OCI-LY7 (cell line): ENCODE measurements at regions of chr21 and their contacts with region 1.

Region 1: GRCh38 chr21:18468790-18469189 is 65.2 kb upstream of the TMPRSS15 start:
- DNase-seq: no peak
- H3K4me3 ChIP-seq: no peak overlapping the region
- H3K27ac ChIP-seq: no peak overlapping the region
- H3K4me1 ChIP-seq: peaks cover 20% of the 10 kb centered on the region
- CTCF ChIP-seq: no peak

Region 2: GRCh38 chr21:18382141-18382540 is 86.6 kb before region 1 on chr21:
- CTCF ChIA-PET with region 1: no interaction called
- POLR2A ChIA-PET with region 1: no interaction called
- intact Hi-C with region 1: loop called (anchors 1 kb)
- DNase-seq: peak; percentile 78
- H3K4me3 ChIP-seq: peak overlapping the region; percentile 24
- H3K27ac ChIP-seq: peak overlapping the region; percentile 86
- H3K4me1 ChIP-seq: peaks cover 30% of the 10 kb centered on the region
- CTCF ChIP-seq: no peak

Region 3: GRCh38 chr21:18449605-18450550 is 18.9 kb before region 1 on chr21:
- CTCF ChIA-PET with region 1: no interaction called
- POLR2A ChIA-PET with region 1: interaction called, 11 read pairs
- intact Hi-C with region 1: no loop called
- DNase-seq: peak; percentile 35
- H3K4me3 ChIP-seq: no peak overlapping the region
- H3K27ac ChIP-seq: peak overlapping the region; percentile 53
- H3K4me1 ChIP-seq: peaks cover 29% of the 10 kb centered on the region
- CTCF ChIP-seq: no peak